Activated CD8-positive, alpha-beta memory T cell treated with anti-CD3 and anti-CD28 coated beads, Interleukin-2, amount 10 ng/mL, durations not matched to agents 7 days and 5 days (primary cell): ENCODE measurements at regions of chr7 and their contacts with region 1.

Region 1: DNA sequence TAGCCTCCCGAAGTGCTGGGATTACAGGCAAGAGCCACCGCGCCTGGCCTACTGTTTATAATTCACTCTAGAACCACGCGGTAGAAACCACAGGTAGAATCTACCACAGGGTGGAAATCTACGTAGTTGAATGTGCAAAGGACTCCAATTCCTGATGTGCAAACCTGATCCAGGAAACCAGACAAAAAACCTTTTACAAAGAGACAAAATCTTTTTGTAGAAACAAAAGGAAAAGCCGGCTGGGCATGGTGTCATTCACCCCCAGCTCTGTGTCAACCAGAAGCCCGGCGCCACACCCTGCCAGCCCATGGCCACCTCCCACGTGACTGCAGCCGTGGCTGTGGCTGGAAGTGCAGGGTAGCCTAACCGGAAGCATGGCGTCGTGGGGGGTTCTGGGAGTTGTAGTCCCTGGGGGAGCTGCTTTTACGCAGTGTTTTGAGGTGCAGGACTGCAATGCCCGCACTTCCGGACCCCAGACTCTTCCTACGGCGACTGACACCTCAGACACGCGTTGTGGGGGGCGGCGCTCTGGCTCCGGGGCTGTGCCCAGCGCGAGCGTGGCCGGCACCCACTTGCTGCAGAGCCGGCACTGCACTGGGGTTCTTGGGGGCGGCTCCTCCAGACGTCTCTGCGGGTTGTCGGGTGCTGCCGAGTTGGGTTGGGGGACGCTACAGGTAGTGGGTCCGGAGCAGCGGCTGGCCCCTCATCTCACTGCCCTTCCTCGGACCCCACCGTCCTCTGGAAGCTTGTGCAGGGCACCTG is 41.5 kb upstream of the RNF216 start:
- DNase-seq: peak; percentile 99
- ATAC-seq: peak; percentile 97
- H3K4me3 Mint-ChIP-seq: peak overlapping the region; percentile 72
- H3K27ac Mint-ChIP-seq: peak overlapping the region; percentile 92
- H3K4me1 Mint-ChIP-seq: peaks cover 22% of the 10 kb centered on the region
- H3K27me3 Mint-ChIP-seq: no peaks in the 10 kb centered on the region

Region 2: DNA sequence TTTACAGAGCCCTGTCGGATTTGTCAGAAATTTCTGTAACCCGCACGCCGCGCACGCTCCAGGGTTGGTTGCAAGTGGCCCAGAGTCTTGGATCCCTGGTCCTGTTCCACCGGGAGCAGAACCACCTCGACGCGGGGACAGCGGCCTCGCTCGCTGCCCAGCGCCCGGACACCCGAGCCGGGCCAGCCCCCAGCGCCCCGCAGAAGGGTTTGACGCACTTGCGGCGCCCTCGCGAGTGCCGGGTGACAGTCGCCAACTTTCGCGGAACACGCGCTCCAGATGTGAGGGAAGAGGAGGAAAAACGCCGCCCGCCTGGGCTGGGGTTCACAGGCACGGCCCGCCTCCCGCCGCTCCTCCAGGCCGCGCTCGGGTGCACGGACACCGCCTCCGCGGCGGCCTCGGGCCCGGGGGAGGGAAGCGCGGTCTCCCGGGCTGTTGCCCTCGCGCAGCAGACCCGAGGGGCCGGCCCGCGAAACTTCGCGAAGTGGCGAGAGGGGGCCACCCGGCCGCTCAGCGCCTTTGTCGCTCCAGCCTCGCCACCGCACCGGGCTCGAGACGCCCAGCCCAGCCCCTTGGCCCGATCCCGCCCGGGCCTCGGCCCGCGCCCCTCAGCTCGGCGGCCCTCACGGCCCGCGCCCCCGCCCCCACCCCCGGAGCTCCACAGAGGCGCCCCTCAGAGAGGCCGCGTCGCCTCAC is 42.0 kb before region 1 on chr7:
- CTCF ChIA-PET with region 1: interaction called, 11 read pairs
- DNase-seq: peak; percentile 56
- ATAC-seq: peak; percentile 48
- H3K4me3 Mint-ChIP-seq: peak overlapping the region; percentile 74
- H3K27ac Mint-ChIP-seq: peak overlapping the region; percentile 84
- H3K4me1 Mint-ChIP-seq: peaks cover 37% of the 10 kb centered on the region
- H3K27me3 Mint-ChIP-seq: no peaks in the 10 kb centered on the region